ENCODE measurements at regions of chr1 and their contacts with region 1.

Region 1: GRCh38 chr1:40531381-40532061 is at the start of gene ZNF684:
- DNase-seq: peak; percentile 64 to 96 (median 85)
- ATAC-seq: peak; percentile 96
- H3K4me3 ChIP-seq: peak within 1 kb of the TSS; percentile 68 to 71
- H3K4me3 Mint-ChIP-seq: peak within 1 kb of the TSS; percentile 100
- H3K27ac ChIP-seq: peak within 1 kb of the TSS; percentile 57 to 83
- H3K27ac Mint-ChIP-seq: peak within 1 kb of the TSS; percentile 93
- H3K4me1 ChIP-seq: peaks cover 11% of the 10 kb centered on the region
- H3K4me1 Mint-ChIP-seq: peaks cover 28% of the 10 kb centered on the region
- H3K27me3 ChIP-seq: peaks cover 0 to 3% of the 10 kb centered on the region in 2 experiments
- H3K27me3 Mint-ChIP-seq: peaks cover 6% of the 10 kb centered on the region
- CTCF ChIP-seq: no peak
- total RNA-seq, gene ZNF684: 2.9 TPM

Region 2: GRCh38 chr1:40161125-40161887 is 370.2 kb before region 1 on chr1 and contains the start of gene RLF:
- CTCF ChIA-PET with region 1: no interaction called
- POLR2A ChIA-PET with region 1: no interaction called
- intact Hi-C with region 1: loop called (anchors 1 kb)
- DNase-seq: peak; percentile 90 to 97 (median 94)
- ATAC-seq: peak; percentile 95
- H3K4me3 ChIP-seq: peak within 1 kb of the TSS; percentile 96 to 100
- H3K4me3 Mint-ChIP-seq: no peak within 1 kb of the TSS
- H3K27ac ChIP-seq: peak within 1 kb of the TSS; percentile 96 to 98
- H3K27ac Mint-ChIP-seq: no peak within 1 kb of the TSS
- H3K4me1 ChIP-seq: peaks cover 46% of the 10 kb centered on the region
- H3K4me1 Mint-ChIP-seq: peaks cover 22% of the 10 kb centered on the region
- H3K27me3 ChIP-seq: no peaks in the 10 kb centered on the region
- H3K27me3 Mint-ChIP-seq: no peaks in the 10 kb centered on the region
- CTCF ChIP-seq: no peak
- total RNA-seq, gene RLF: 62.2 to 62.6 TPM

Region 3: DNA sequence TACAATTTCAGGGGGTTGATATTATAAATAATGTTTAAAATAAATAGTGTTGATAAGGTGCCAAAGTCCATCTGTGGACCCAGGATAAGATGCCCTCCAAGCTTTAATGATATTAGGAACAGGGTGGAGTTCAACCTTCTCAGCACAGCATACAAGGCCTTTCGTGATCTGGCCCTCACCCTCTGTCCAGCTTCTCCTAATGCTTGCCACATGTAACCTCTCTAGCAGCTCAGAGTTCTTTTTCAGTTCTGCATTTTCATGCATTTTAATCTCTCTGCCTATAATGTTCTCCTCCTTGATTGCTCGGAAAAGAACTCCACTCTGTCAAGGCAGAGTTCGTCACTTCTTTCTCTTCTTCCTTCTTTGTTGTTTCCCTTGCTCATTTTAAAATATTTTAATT is 179.4 kb before region 1 on chr1:
- CTCF ChIA-PET with region 1: no interaction called
- POLR2A ChIA-PET with region 1: no interaction called
- intact Hi-C with region 1: loop called in 1 of 2 experiments (anchors 10 kb)
- DNase-seq: no peak
- ATAC-seq: no peak
- H3K4me3 ChIP-seq: no peak overlapping the region
- H3K4me3 Mint-ChIP-seq: no peak overlapping the region
- H3K27ac ChIP-seq: no peak overlapping the region
- H3K27ac Mint-ChIP-seq: no peak overlapping the region
- H3K4me1 ChIP-seq: no peaks in the 10 kb centered on the region
- H3K4me1 Mint-ChIP-seq: no peaks in the 10 kb centered on the region
- H3K27me3 ChIP-seq: no peaks in the 10 kb centered on the region
- H3K27me3 Mint-ChIP-seq: no peaks in the 10 kb centered on the region
- CTCF ChIP-seq: no peak

Region 4: DNA sequence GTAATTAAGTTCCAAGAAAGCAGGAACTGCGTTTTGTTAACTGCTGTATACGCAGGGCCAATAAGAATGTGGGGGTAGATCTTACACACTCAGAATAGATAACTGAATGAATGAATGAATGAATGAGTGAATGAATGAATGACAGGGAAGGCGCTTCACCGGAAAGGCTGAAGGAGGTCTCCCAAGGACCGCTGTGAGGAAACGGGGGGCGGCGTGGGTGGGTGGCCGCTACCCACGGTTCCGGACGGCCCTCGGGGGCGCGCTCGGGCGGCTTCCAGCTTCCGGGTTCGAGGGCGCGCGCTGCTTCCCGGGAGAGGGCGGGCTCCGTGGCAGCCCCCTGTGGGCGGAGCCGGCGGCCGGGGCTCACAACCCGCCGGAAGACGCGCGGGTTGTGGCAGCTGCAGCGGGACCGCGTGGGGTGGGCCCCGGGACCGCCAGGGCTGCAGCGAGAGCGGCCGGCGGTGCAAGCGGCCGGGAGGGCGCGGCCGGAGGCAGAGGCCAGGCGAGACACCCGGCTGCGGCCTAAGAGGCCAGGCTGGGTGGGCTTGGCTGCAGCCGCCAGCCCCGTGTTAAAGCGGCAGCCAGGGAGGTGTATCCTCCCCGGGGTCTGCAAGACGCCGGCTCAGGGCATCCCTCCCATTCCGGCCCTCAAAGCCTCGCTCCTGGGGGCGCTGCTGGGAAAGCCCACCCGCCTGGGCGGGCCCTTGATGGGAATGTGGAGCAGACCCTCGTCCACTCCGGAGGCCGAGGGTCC is 54.4 kb before region 1 on chr1 and contains the start of gene ZFP69:
- CTCF ChIA-PET with region 1: interaction called, 9 read pairs
- POLR2A ChIA-PET with region 1: no interaction called
- intact Hi-C with region 1: loop called in 1 of 2 experiments (anchors 1 kb)
- DNase-seq: peak; percentile 29 to 88 (median 71)
- ATAC-seq: peak; percentile 95
- H3K4me3 ChIP-seq: peak within 1 kb of the TSS; percentile 79 to 82
- H3K4me3 Mint-ChIP-seq: peak within 1 kb of the TSS; percentile 91
- H3K27ac ChIP-seq: peak within 1 kb of the TSS; percentile 58 to 65
- H3K27ac Mint-ChIP-seq: peak within 1 kb of the TSS; percentile 87
- H3K4me1 ChIP-seq: peaks cover 10% of the 10 kb centered on the region
- H3K4me1 Mint-ChIP-seq: peaks cover 24% of the 10 kb centered on the region
- H3K27me3 ChIP-seq: no peaks in the 10 kb centered on the region
- H3K27me3 Mint-ChIP-seq: no peaks in the 10 kb centered on the region
- CTCF ChIP-seq: no peak
- total RNA-seq, gene ZFP69: 0.64 to 0.92 TPM

Region 5: GRCh38 chr1:40855513-40855912 is 324.0 kb after region 1 on chr1:
- CTCF ChIA-PET with region 1: no interaction called
- POLR2A ChIA-PET with region 1: no interaction called
- intact Hi-C with region 1: loop called in 1 of 2 experiments (anchors 5 kb)
- DNase-seq: peak in 2 of 9 experiments; percentile 35 to 44
- ATAC-seq: no peak
- H3K4me3 ChIP-seq: no peak overlapping the region
- H3K4me3 Mint-ChIP-seq: no peak overlapping the region
- H3K27ac ChIP-seq: no peak overlapping the region
- H3K27ac Mint-ChIP-seq: no peak overlapping the region
- H3K4me1 ChIP-seq: peaks cover 3% of the 10 kb centered on the region
- H3K4me1 Mint-ChIP-seq: peaks cover 3% of the 10 kb centered on the region
- H3K27me3 ChIP-seq: no peaks in the 10 kb centered on the region
- H3K27me3 Mint-ChIP-seq: no peaks in the 10 kb centered on the region
- CTCF ChIP-seq: no peak

Measured in CD8-positive, alpha-beta T cell (primary cell).